Esophagus muscularis mucosa (tissue), 4 donors: ENCODE measurements at regions of chr10 and their contacts with region 1.

Region 1: DNA sequence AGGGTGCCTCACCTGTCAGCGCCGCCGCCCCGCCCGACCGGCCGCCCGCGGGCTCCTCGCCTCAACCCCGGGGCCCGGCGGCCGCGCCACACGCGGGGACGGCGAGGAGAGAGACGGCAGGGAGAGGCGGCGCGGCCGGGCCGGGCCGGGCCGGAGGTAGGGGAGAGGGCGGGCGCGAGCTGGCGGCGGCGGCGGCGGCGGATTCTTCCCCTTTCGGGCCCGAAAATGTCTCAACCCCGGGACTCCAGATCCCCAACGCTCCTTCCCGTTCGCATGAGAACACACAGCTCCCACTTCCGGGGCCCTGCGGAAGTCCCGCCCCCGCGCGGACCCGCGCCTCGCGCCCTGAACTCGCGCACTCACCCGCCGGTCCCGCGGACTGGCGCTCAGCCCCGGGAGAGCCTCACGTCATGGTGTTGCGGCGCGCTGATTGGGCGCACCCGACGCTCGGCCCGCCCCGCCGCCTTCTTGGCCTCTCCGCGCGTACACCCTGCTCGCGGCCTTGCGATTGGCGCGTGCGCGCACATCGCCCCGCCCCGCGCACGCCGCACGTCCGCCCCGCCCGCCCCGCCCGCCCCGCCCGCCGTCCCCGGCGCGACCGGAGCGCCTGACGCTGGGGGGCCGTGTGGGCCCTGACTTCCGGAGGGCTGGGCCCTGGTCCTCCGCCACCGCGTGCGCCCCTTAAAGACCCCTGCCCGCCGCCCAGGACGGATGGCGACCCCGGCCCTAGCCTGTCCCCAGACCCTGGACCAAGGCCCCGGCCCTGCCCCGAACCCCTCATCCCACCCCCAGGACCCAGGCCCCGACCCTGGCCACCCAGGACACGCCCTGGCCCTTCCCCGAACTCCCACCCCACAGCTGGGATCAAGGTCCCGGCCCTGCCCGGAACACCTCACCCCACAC is at the start of gene LARP4B:
- DNase-seq: peak; percentile 97
- H3K4me3 ChIP-seq: peak within 1 kb of the TSS; percentile 85 to 93 (median 88)
- H3K27ac ChIP-seq: peak within 1 kb of the TSS; percentile 95 to 98 (median 97)
- H3K4me1 ChIP-seq: peaks cover 42 to 51% (median 48%) of the 10 kb centered on the region in 4 donors
- H3K27me3 ChIP-seq: no peaks in the 10 kb centered on the region
- CTCF ChIP-seq: no peak
- EP300 ChIP-seq: no peak
- POLR2A ChIP-seq: peak; percentile 60
- total RNA-seq, gene LARP4B: 35.6 to 43.1 (median 38.2) TPM

Region 2: DNA sequence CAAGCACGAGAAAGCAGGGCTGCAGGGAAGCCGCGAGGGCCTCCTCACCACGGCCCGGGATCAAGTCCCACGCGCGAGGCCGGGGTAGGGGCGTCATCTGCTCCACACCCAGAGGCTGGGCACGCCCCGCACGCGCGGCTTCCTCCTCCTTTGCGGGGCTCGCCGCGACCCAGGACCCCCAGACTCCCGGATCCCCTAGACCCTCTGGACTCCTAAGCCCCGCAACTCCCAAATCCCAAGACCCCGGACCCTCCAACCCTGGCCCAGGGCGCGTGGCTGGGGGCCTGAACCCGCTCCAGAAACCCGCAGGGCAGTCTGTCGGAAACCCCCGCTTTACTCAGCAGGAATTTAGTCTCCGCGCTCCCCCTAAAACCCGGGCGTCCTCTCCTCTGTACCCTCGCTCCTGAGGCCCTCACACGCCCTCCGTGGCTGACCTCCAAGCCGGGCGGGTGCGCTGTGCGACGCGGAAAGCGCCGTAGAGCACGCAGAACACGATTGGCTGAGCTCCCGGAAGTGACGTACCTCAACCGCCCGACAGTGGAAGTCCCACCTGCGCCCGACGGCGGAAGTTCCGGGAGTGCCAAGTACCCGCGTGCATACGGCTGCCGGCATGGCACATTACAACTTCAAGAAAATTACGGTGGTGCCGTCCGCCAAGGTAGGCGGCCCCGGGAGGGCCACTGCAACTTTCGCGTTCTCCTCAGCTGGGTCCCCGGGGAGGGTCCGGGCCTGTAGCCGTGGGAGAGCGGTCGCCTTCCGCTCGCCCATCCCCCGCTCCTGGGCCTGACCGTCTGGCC is 56.4 kb after region 1 on chr10 and contains the start of gene GTPBP4:
- intact Hi-C with region 1: loop called (anchors 5 kb)
- DNase-seq: peak; percentile 100
- H3K4me3 ChIP-seq: peak within 1 kb of the TSS; percentile 70 to 92 (median 89)
- H3K27ac ChIP-seq: peak within 1 kb of the TSS; percentile 90 to 95 (median 92)
- H3K4me1 ChIP-seq: peaks cover 18 to 35% (median 30%) of the 10 kb centered on the region in 4 donors
- H3K27me3 ChIP-seq: no peaks in the 10 kb centered on the region
- CTCF ChIP-seq: peak in 1 of 3 experiments; percentile 32
- EP300 ChIP-seq: no peak
- POLR2A ChIP-seq: peak; percentile 61
- total RNA-seq, gene GTPBP4: 18.3 to 39.1 (median 27.4) TPM

Region 3: GRCh38 chr10:1056326-1057105 is 124.8 kb after region 1 on chr10 and contains the start of gene WDR37:
- intact Hi-C with region 1: loop called (anchors 10 kb)
- DNase-seq: no peak
- H3K4me3 ChIP-seq: peak within 1 kb of the TSS; percentile 94 to 97 (median 95)
- H3K27ac ChIP-seq: peak within 1 kb of the TSS; percentile 99 to 100 (median 99)
- H3K4me1 ChIP-seq: peaks cover 31 to 57% (median 45%) of the 10 kb centered on the region in 4 donors
- H3K27me3 ChIP-seq: no peaks in the 10 kb centered on the region
- CTCF ChIP-seq: no peak
- EP300 ChIP-seq: no peak
- POLR2A ChIP-seq: peak; percentile 81
- total RNA-seq, gene WDR37: 9.1 to 17.2 (median 13.2) TPM